ENCODE measurements at regions of chr17 and their contacts with region 1.

Region 1: GRCh38 chr17:49694847-49695683 is 12.7 kb downstream of the SLC35B1 start:
- H3K4me3 ChIP-seq: no peak overlapping the region
- H3K27ac ChIP-seq: no peak overlapping the region
- H3K4me1 ChIP-seq: no peaks in the 10 kb centered on the region
- CTCF ChIP-seq: peak; percentile 48

Region 2: DNA sequence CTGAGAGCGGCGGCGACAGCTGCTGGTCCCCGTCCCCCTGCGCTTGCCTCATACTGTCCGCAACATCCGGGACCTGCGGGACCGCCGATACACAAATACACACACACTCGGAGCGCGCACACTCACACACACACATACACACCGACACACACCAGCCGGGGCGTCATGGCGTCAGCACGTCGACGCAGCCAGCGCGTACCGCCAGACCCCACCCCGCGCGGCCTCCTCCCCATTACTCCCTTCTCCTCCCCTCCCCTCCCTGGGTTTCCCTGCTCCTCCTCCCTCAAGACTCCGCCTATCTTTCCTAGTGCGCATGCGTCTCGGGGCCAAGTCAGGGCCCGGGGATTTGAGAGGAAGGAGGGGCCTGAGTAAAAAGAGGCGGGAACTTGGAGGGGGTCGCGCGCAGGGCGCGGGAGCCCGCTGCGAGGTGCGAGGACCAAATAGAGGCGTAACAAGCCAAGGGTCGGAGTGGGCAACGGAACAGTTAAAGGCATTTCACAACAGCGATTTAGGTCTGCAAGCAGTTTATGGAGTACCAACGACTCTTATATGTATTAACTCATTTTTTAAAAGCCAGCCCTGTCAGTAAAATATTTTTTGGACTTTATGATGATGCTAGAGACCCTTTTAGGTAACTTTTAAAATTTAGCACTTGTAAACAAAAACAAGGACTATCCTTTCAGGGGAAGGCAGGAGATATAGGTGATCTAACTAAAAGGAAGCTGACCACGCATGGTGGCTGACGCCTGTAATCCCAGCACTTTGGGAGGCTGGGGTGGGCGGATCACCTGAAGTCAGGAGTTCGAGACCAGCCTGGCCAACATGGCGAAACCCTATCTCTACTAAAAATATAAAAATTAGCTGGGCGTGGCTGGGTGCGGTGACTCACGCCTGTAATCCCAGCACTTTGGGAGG is 16.9 kb before region 1 on chr17 and contains the start of gene SPOP:
- CTCF ChIA-PET with region 1: interaction called, 11 read pairs
- POLR2A ChIA-PET with region 1: no interaction called
- H3K4me3 ChIP-seq: peak within 1 kb of the TSS; percentile 78
- H3K27ac ChIP-seq: peak within 1 kb of the TSS; percentile 70
- H3K4me1 ChIP-seq: peaks cover 15% of the 10 kb centered on the region; the same call in 1 of the 2 replicates
- CTCF ChIP-seq: no peak

Region 3: DNA sequence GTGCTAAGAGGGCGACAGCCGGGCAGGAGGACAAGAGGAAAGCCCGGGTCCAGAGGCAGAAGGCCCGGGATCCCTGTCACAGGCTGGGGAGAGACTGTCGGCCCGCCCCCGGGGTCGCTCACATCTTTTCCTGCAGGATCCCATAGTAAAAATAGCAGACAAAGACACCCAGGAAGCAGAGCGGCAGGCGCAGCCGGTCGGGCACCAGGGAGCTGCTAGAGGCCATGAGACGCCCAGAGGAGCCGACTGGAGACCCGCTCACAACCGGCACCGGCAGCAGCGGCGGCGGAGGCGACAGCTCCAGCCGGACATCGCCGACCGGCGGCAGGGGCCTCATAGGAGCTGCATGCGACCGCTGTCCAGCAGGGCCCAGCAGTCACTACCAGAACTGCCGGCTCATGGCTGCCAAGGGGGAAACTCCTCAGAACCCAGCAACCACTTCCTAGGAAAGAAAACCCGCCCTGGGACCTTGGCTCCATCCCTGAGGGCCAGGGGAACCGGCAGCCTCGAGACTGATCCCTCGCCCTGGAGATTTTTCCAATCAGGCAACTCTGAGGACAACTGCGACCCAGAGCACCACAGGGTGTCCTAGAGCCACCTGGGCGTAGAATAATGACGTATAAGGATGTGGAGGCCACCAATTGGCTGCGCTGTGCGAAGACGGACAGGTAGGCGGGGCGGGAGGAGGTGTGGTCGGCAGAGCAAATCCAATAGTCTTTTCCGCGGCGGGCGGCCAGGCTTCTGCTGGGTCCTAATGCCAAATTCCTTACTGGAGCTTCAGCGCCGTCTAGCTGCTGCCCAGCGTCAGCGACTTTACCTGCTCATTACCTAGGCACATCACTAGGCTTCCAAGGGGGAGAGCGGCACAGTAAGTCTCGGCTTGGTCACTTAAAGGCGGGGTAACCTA is 12.8 kb after region 1 on chr17 and contains the start of gene SLC35B1:
- CTCF ChIA-PET with region 1: interaction called, 75 read pairs
- POLR2A ChIA-PET with region 1: interaction called, 8 read pairs
- H3K4me3 ChIP-seq: peak within 1 kb of the TSS; percentile 88
- H3K27ac ChIP-seq: peak within 1 kb of the TSS; percentile 93
- H3K4me1 ChIP-seq: no peaks in the 10 kb centered on the region
- CTCF ChIP-seq: peak; percentile 99

Region 4: DNA sequence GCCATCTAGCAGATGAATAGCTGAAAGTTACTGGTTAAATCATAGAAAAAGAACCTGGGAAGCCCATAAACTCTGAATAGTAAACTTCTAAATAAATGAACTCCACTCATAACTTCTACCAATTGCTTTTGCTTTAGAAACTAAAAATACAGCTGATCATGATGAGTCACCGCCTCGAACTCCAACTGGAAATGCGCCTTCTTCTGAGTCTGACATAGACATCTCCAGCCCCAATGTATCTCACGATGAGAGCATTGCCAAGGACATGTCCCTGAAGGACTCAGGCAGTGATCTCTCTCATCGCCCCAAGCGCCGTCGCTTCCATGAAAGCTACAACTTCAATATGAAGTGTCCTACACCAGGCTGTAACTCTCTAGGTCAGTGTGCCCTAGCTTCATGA is 103.1 kb after region 1 on chr17:
- CTCF ChIA-PET with region 1: interaction called, 10 read pairs
- POLR2A ChIA-PET with region 1: no interaction called
- H3K4me3 ChIP-seq: no peak overlapping the region
- H3K27ac ChIP-seq: no peak overlapping the region
- H3K4me1 ChIP-seq: no peaks in the 10 kb centered on the region
- CTCF ChIP-seq: no peak